ENCODE measurements at regions of chr9 and their contacts with region 1.

Region 1: DNA sequence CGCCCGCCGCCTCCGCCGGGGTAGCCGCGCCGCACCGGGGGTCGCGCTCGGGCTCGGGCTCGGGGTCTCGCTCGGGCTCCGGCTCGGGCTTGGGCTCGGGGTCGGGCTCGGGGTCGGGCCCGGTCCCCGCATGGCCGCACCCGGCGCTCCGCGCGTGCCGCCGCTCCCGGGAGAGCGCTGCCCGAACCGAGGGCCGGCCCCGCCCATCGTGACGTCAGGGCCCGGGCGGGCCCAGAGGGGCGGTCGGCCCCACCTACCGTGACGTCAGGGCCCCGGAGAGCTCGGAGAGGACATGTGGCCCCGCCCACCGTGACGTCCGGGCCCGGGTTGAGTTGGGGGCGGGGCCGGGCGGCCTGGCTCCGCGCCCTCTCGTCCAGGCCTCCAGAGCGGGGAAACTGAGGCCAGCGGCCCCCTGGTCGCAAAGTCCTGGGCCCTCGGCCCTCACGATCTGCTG is at the start of gene NSMF:
- DNase-seq: peak; percentile 95 to 98 (median 97)
- H3K4me3 ChIP-seq: peak within 1 kb of the TSS; percentile 46
- H3K27ac ChIP-seq: peak within 1 kb of the TSS; percentile 11 to 72
- H3K4me1 ChIP-seq: peaks cover 15% of the 10 kb centered on the region
- H3K27me3 ChIP-seq: no peaks in the 10 kb centered on the region
- CTCF ChIP-seq: no peak
- EP300 ChIP-seq: no peak
- POLR2A ChIP-seq: peak; percentile 89
- total RNA-seq, gene NSMF: 22.9 to 50.3 (median 35.4) TPM

Region 2: GRCh38 chr9:137423004-137423874 is 35.9 kb before region 1 on chr9 and contains the starts of genes EXD3 and NOXA1:
- intact Hi-C with region 1: loop called in 1 of 4 experiments (anchors 2 kb)
- DNase-seq: peak; percentile 95 to 98 (median 97)
- H3K4me3 ChIP-seq: peak within 1 kb of the TSS; percentile 89
- H3K27ac ChIP-seq: peak within 1 kb of the TSS; percentile 16 to 92
- H3K4me1 ChIP-seq: no peaks in the 10 kb centered on the region
- H3K27me3 ChIP-seq: no peaks in the 10 kb centered on the region
- CTCF ChIP-seq: peak in 2 of 3 donors; percentile 83 to 89
- EP300 ChIP-seq: no peak
- POLR2A ChIP-seq: peak; percentile 63
- total RNA-seq, gene EXD3: 19.5 to 30.6 (median 26.2) TPM
- total RNA-seq, gene NOXA1: 8.5 to 18.5 (median 13.8) TPM